T-cell (primary cell): ENCODE measurements at regions of chr19 and their contacts with region 1.

Region 1: DNA sequence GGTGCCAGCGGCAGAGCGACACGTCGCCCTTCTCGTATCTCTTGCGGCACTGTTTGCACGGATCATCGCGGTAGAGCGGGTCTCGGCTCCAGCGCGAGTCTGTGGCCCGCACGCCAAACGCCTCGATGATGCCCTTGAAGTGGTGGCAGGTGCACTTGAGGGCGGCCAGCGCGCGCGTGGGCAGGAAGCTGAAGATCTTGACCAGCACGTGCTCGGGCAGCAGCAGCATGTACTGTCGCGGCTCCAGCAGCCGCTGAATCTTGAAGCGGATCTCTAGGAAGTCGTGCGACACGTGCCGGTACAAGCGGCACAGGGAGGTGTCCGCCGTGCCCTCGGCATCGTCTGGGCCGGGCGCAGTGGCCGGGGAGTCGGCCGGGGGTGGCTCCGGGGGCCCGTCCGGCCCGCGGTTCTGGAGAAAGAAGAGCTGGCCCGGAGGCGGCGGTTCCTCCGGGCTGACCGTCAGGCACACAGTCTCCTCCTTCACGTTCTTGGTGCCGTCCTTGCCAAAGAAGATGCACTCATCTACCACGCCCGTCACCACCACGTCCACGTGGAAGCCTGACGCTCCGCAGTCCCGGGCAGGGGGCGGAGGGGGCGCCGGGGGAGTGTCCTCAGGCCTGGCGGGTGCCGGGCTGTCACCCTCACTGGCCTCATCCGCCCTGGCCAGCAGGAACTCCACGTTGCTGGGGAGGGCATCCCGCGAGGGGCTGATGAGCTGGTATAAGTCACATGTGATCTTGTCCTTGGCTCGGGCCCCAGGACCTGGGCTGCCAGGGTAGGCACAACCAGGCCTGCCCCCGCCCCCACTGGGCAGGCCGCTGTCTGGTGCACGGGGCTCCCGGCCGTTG is 18.6 kb downstream of the FBXO46 start:
- DNase-seq: no peak
- ATAC-seq: no peak
- H3K4me3 ChIP-seq: no peak overlapping the region
- H3K4me3 Mint-ChIP-seq: no peak overlapping the region
- H3K27ac ChIP-seq: no peak overlapping the region
- H3K27ac Mint-ChIP-seq: no peak overlapping the region
- H3K4me1 ChIP-seq: peaks cover 6 to 20% of the 10 kb centered on the region in 2 experiments
- H3K4me1 Mint-ChIP-seq: peaks cover 36 to 42% (median 37%) of the 10 kb centered on the region in 3 donors
- H3K27me3 ChIP-seq: no peaks in the 10 kb centered on the region
- H3K27me3 Mint-ChIP-seq: no peaks in the 10 kb centered on the region

Region 2: GRCh38 chr19:45730389-45731288 is 18.6 kb after region 1 on chr19 and contains the start of gene FBXO46:
- CTCF ChIA-PET with region 1: interaction called in 1 of 2 experiments, 7 read pairs
- POLR2A ChIA-PET with region 1: interaction called in 1 of 2 experiments, 14 read pairs
- DNase-seq: peak; percentile 85 to 96 (median 91)
- ATAC-seq: peak; percentile 99
- H3K4me3 ChIP-seq: peak within 1 kb of the TSS; percentile 63 to 82
- H3K4me3 Mint-ChIP-seq: peak within 1 kb of the TSS; percentile 82 to 95 (median 92)
- H3K27ac ChIP-seq: peak within 1 kb of the TSS; percentile 64
- H3K27ac Mint-ChIP-seq: peak within 1 kb of the TSS; percentile 89 to 91
- H3K4me1 ChIP-seq: peaks cover 9 to 37% of the 10 kb centered on the region in 2 experiments
- H3K4me1 Mint-ChIP-seq: peaks cover 36 to 38% (median 38%) of the 10 kb centered on the region in 3 donors
- H3K27me3 ChIP-seq: no peaks in the 10 kb centered on the region
- H3K27me3 Mint-ChIP-seq: no peaks in the 10 kb centered on the region
- total RNA-seq, gene FBXO46: 27.9 to 48.3 (median 38.0) TPM